ENCODE measurements at regions of chr14 and their contacts with region 1.

Region 1: DNA sequence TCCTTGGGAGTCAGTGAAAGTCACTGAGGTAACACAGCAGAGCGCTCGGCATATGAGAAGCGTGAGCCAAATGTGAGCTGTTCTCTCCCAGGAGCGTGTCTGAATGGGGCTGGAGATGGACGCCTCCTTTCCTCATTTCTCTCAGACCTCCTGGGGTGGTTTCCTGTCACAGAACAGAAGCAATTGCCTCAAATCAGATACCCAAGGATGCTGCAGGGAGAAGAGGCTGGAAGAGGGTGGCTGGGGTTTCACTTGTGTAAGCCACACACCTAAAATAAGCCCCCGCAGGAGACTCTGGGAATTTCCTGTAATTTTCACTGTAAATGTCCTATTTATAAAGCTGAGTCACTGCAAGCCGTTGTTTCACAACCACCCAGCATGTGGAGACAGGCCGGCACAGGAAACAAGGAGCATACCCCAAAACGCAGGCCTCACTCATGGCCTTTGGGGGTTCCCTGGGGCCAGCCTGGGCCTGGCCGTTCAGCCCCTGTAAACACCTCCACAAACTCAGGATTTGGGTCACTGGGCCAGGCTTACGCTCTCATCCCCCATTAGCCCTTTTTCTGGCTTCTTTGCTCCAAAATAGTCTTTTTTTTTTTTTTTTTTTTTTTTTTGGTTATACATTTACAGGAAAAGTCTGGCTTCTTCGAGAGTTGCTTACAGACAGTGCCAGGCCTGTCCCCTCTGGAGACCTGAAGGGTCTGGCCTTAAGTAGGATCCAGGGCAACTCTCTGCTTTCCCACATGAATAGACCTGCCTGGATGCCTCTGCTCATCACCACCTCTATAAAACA is 55.3 kb downstream of the VCPKMT start:
- DNase-seq: peak; percentile 59
- H3K4me3 Mint-ChIP-seq: peak overlapping the region; percentile 93
- H3K27ac Mint-ChIP-seq: peak overlapping the region; percentile 100
- H3K4me1 Mint-ChIP-seq: peaks cover 85% of the 10 kb centered on the region
- H3K27me3 Mint-ChIP-seq: no peaks in the 10 kb centered on the region

Region 2: DNA sequence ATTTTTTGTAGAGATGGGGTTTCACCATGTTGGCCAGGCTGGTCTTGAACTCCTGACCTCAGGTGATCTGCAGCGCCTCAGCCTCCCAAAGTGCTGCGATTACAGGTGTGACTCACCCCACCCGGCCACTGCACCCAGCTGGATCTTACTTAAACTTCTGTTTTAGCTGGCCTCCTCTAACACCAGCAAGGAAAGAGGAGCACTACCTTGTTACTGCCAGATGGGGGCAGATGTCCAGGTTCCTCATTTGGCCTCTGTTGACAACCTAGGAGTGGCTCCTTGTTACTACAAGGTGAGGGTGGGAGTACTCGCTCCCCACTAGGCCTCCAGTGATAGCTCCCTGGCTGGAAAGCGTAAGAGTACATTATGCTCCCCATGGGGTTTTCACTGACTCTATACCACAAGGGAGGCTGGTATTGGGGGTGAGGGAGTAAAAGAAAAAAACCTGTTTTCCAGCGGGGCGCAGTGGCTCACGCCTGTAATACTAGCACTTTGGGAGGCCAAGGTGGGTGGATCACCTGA is 181.3 kb before region 1 on chr14:
- CTCF ChIA-PET with region 1: interaction called, 10 read pairs
- POLR2A ChIA-PET with region 1: interaction called, 15 read pairs
- DNase-seq: peak; percentile 76
- H3K4me3 Mint-ChIP-seq: no peak overlapping the region
- H3K27ac Mint-ChIP-seq: peak overlapping the region; percentile 50
- H3K4me1 Mint-ChIP-seq: peaks cover 48% of the 10 kb centered on the region
- H3K27me3 Mint-ChIP-seq: no peaks in the 10 kb centered on the region

Region 3: DNA sequence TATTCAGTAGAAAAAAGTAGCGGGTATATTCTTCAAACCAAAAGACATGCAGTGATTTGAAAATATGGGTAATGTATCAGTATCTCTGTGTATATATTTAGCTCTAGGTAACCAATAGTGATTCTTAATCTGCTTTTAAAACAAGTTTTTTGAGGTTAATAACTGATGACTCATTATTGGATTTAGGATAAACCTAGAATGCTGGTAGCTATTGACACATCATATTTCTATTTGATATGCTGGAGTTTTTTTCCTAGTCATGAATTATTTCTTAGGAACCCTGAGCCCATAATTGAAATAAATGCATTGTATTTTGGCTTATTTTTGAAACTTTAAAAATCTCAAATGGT is 152.7 kb before region 1 on chr14:
- CTCF ChIA-PET with region 1: interaction called, 3 read pairs
- POLR2A ChIA-PET with region 1: interaction called, 12 read pairs
- DNase-seq: no peak
- H3K4me3 Mint-ChIP-seq: peak overlapping the region; percentile 21
- H3K27ac Mint-ChIP-seq: peak overlapping the region; percentile 49
- H3K4me1 Mint-ChIP-seq: peaks cover 45% of the 10 kb centered on the region
- H3K27me3 Mint-ChIP-seq: no peaks in the 10 kb centered on the region

Region 4: GRCh38 chr14:49971156-49972130 is 89.6 kb before region 1 on chr14:
- CTCF ChIA-PET with region 1: interaction called, 10 read pairs
- POLR2A ChIA-PET with region 1: interaction called, 92 read pairs
- DNase-seq: peak; percentile 63
- H3K4me3 Mint-ChIP-seq: peak overlapping the region; percentile 72
- H3K27ac Mint-ChIP-seq: peak overlapping the region; percentile 98
- H3K4me1 Mint-ChIP-seq: peaks cover 57% of the 10 kb centered on the region
- H3K27me3 Mint-ChIP-seq: no peaks in the 10 kb centered on the region

Region 5: DNA sequence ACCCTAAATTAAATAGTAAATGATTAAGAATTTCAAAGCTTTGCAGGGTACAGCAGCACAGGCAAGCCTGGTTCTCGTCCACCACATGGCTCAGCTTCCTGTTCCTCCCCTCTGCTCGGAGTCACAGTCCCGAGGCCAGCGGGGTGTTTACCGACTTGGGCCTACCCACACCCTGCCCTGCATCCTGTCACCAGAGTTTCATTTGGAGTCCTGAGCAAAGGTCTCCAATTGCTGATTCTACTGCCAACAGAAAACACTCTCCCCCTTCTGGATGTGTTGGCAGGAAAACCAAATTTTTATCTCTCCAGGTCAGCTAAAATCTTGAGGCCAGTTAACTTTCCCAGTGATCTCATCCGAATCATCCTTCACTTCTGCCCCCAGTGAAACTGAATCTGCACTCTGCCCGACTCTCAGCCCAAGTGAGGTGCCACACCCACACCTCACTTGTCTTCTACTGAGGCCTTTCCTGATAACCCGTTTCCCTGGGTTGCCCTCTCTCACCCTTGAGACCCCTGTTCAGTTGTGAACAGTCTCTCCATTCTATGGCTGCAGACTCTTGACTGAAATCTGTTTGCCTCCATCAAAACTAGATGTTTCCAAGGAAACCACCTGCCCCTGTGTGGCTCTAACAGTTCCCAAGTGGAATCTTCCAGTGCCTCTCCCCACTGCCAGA is 15.9 kb before region 1 on chr14:
- CTCF ChIA-PET with region 1: interaction called, 31 read pairs
- POLR2A ChIA-PET with region 1: interaction called, 207 read pairs
- DNase-seq: peak; percentile 89
- H3K4me3 Mint-ChIP-seq: peak overlapping the region; percentile 6
- H3K27ac Mint-ChIP-seq: peak overlapping the region; percentile 92
- H3K4me1 Mint-ChIP-seq: peaks cover 70% of the 10 kb centered on the region
- H3K27me3 Mint-ChIP-seq: no peaks in the 10 kb centered on the region

Region 6: GRCh38 chr14:50116181-50116956 is 55.3 kb after region 1 on chr14 and contains the start of gene VCPKMT:
- CTCF ChIA-PET with region 1: interaction called, 3 read pairs
- POLR2A ChIA-PET with region 1: interaction called, 10 read pairs
- DNase-seq: peak; percentile 97
- H3K4me3 Mint-ChIP-seq: peak within 1 kb of the TSS; percentile 99
- H3K27ac Mint-ChIP-seq: peak within 1 kb of the TSS; percentile 97
- H3K4me1 Mint-ChIP-seq: peaks cover 40% of the 10 kb centered on the region
- H3K27me3 Mint-ChIP-seq: no peaks in the 10 kb centered on the region
- total RNA-seq, gene VCPKMT: 7.5 to 9.5 TPM

Region 7: DNA sequence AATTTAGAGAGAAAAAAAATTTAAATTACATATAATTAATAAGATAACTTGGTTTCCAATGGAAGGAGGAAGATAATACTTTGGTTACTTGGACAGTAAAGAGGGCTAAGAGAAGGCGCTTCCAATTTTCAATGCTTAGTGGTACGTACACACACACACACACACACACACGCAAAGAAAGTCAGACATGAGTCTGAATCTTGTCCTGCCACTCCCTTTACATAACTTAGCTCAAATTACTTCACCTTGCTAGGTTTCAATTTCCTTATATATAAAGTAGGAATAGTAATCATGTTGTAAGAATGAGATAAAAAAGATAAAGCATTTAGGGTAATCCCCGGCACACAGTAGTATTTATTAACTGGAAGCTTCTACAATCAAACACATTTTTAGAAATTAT is 95.0 kb after region 1 on chr14:
- CTCF ChIA-PET with region 1: no interaction called
- POLR2A ChIA-PET with region 1: no interaction called
- DNase-seq: no peak
- H3K4me3 Mint-ChIP-seq: no peak overlapping the region
- H3K27ac Mint-ChIP-seq: no peak overlapping the region
- H3K4me1 Mint-ChIP-seq: no peaks in the 10 kb centered on the region
- H3K27me3 Mint-ChIP-seq: no peaks in the 10 kb centered on the region

Region 8: DNA sequence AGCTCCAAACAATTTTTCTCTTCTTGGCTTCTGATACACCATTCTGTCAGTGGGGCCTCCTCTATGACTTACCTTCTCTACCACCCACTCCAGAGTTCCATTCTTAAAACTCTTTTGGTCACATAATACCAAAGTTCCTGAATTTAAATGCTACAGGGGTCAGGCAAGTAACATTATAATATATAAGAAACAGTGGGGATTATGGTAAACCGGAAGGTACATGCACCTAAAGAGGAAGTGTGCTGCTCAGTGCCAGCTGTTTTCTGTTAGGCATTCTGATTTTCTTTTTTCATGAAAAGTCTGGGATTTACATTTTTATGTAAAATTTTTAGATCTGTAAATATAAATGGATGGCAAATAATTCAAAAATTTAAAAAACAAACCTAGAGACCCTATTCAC is 130.4 kb after region 1 on chr14:
- CTCF ChIA-PET with region 1: no interaction called
- POLR2A ChIA-PET with region 1: no interaction called
- DNase-seq: no peak
- H3K4me3 Mint-ChIP-seq: no peak overlapping the region
- H3K27ac Mint-ChIP-seq: no peak overlapping the region
- H3K4me1 Mint-ChIP-seq: no peaks in the 10 kb centered on the region
- H3K27me3 Mint-ChIP-seq: no peaks in the 10 kb centered on the region